Mucosa of descending colon (tissue), 3 donors: ENCODE measurements at regions of chr7 and their contacts with region 1.

Region 1: DNA sequence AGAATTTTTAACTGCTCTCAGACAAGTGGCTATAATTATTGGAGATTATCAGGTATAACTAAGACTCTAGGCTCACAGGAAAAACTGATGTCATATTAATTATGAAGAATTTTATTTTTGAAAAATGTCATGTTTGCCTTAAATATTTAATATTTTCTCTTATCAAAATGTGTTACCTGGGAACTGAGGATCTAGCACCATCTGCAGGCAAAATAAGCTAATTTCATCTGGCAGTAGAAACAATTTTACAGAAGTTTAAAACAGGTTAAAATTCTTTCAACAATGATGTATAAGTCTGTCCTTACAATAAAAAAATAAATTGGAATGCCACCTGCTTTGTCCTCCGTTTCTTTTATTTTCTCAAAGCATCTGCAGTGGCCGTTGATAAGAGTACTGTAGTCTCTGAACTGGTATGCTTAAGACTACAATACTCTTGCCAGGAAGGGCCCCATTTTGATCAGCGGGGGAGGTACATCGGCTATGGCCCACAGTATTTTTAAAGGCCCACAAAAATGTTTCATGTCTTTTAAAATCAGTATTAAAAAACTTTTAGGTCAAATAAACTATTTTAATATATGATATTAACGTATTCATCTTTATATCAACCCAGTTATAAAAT is 81.3 kb downstream of the VWDE start:
- DNase-seq: peak in 1 of 3 donors; percentile 29
- ATAC-seq: no peak
- H3K4me3 ChIP-seq: no peak overlapping the region
- H3K4me1 ChIP-seq: no peaks in the 10 kb centered on the region
- CTCF ChIP-seq: no peak

Region 2: DNA sequence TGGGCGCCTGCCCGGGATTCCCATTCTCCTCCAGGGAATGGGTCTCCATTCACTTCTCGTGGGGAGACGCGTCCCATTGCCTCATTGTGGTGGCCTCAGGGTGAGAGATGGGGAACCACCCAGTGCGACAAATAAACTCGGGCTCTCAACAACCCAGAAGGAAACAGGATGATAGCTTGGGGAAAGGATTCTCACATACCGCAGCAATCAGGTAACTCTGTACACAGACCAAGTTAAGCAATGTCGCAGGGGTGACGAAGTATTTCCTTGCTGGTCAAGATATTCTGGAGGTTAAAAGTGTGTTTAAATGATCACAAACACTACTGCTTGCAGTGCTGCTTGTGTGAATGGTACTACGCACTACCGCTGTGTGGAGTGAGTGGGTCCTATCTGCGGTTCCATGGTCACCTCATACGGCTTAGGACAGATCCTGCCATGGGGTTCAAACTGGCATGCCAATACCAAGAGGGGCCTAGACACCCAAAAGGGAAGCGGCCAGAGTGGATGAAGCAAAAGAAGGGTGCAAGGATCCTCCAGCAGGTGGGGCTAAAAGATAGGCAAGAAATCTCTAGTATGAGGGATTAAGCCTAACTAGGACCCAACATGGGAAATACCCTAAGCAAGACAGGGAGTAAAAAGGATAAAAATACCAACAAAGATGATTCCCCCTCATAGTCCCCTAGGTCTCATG is 255.1 kb before region 1 on chr7:
- intact Hi-C with region 1: loop called (anchors 2 to 10 kb)
- DNase-seq: peak in 2 of 3 donors; percentile 26 to 86
- ATAC-seq: peak; percentile 70
- H3K4me3 ChIP-seq: no peak overlapping the region
- H3K4me1 ChIP-seq: no peaks in the 10 kb centered on the region
- CTCF ChIP-seq: peak; percentile 33